Activated T-helper 1 cell treated with anti-CD3 and anti-CD28 coated beads, Interleukin-12 subunit alpha, Interleukin-12 subunit beta, Interleukin-2, Interleukin-4 antibody, amounts not matched to agents 30 ng/mL and 10 ng/mL and 1 ng/mL, durations not matched to agents 14 hours and 24 hours and 36 hours (primary cell): ENCODE measurements at regions of chr15 and their contacts with region 1.

Region 1: DNA sequence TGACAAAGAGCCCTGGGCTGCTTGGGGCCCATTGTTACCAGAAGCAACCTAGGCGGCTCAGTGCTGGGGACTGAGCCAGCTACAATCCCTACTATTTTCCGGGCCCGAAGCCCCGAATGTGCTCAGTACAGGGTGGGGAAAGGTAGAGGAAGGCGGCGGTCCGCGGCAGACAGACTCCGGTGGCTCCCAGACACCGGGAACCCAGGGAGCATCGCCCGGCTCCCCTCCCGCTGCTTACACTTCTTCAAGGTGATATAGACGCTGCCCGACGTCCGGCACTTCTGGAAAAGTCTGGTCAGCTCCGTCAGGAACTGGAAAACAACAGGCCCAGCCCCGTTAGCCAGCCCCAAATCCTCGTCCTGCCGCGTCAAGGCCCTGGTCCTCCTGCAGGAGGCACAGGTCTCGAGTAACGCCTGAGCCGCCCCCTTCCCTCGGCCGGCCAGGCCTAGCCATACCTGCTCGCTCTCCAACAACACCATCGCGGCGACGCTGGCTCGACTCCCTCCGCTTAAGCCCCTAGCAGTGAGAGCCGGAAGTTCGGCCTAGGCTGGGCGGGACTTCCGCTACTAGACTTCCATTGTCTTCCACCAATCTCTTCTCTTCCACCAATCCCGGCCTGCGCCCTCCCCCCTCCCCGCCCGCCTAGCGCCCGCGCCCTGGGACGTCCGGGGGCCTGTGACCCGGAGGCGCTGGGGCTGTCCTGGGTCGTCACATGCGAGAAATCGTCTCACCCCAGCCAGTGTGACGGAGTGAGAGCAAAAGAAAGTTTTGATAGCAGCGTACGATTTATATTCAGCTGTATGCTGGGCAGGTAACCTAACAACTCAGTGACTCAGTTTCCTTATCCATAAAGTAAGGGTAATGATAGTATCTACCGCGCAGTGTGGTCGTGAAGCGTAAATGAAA is at the start of gene SRP14:
- DNase-seq: peak; percentile 88
- H3K4me3 Mint-ChIP-seq: peak within 1 kb of the TSS; percentile 100
- H3K27ac Mint-ChIP-seq: peak within 1 kb of the TSS; percentile 98
- H3K4me1 Mint-ChIP-seq: peaks cover 44% of the 10 kb centered on the region
- H3K27me3 Mint-ChIP-seq: no peaks in the 10 kb centered on the region
- total RNA-seq, gene SRP14: 144 and 147 TPM in 2 replicates

Region 2: GRCh38 chr15:39788108-39788507 is 250.8 kb before region 1 on chr15:
- intact Hi-C with region 1: loop called (anchors 1 kb)
- DNase-seq: no peak
- H3K4me3 Mint-ChIP-seq: no peak overlapping the region
- H3K27ac Mint-ChIP-seq: no peak overlapping the region
- H3K4me1 Mint-ChIP-seq: peaks cover 44% of the 10 kb centered on the region
- H3K27me3 Mint-ChIP-seq: peaks cover 12% of the 10 kb centered on the region

Region 3: GRCh38 chr15:39887832-39888231 is 151.1 kb before region 1 on chr15:
- intact Hi-C with region 1: loop called (anchors 1 kb)
- DNase-seq: no peak
- H3K4me3 Mint-ChIP-seq: no peak overlapping the region
- H3K27ac Mint-ChIP-seq: no peak overlapping the region
- H3K4me1 Mint-ChIP-seq: no peaks in the 10 kb centered on the region
- H3K27me3 Mint-ChIP-seq: peaks cover 13% of the 10 kb centered on the region

Region 4: DNA sequence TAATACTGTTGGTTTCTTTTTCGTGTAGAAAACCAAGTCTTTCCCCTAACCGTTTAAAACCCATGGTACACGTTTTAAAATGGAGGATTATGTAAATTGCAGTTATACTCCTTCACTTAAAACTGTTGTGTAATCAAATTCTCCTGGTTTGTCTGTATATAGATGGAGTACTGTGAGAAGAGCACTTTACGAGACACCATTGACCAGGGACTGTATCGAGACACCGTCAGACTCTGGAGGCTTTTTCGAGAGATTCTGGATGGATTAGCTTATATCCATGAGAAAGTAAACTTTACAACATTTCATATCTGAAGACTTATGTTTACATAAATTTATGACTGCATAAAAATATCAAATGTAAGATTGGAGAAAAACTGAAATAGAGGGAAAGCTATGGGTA is 51.1 kb before region 1 on chr15:
- intact Hi-C with region 1: no loop called
- DNase-seq: no peak
- H3K4me3 Mint-ChIP-seq: no peak overlapping the region
- H3K27ac Mint-ChIP-seq: no peak overlapping the region
- H3K4me1 Mint-ChIP-seq: no peaks in the 10 kb centered on the region
- H3K27me3 Mint-ChIP-seq: no peaks in the 10 kb centered on the region

Region 5: GRCh38 chr15:40160689-40161688 is 122.1 kb after region 1 on chr15 and contains the start of gene BUB1B:
- intact Hi-C with region 1: loop called (anchors 1 kb)
- DNase-seq: peak; percentile 93
- H3K4me3 Mint-ChIP-seq: no peak within 1 kb of the TSS
- H3K27ac Mint-ChIP-seq: no peak within 1 kb of the TSS
- H3K4me1 Mint-ChIP-seq: peaks cover 10% of the 10 kb centered on the region
- H3K27me3 Mint-ChIP-seq: no peaks in the 10 kb centered on the region
- total RNA-seq, gene BUB1B: 71.0 and 76.1 TPM in 2 replicates

Region 6: GRCh38 chr15:40197434-40197833 is 158.5 kb after region 1 on chr15:
- intact Hi-C with region 1: loop called (anchors 5 kb)
- DNase-seq: no peak
- H3K4me3 Mint-ChIP-seq: peak overlapping the region; percentile 55
- H3K27ac Mint-ChIP-seq: peak overlapping the region; percentile 46
- H3K4me1 Mint-ChIP-seq: peaks cover 49% of the 10 kb centered on the region
- H3K27me3 Mint-ChIP-seq: no peaks in the 10 kb centered on the region